ENCODE measurements at regions of chr12 and their contacts with region 1.

Region 1: DNA sequence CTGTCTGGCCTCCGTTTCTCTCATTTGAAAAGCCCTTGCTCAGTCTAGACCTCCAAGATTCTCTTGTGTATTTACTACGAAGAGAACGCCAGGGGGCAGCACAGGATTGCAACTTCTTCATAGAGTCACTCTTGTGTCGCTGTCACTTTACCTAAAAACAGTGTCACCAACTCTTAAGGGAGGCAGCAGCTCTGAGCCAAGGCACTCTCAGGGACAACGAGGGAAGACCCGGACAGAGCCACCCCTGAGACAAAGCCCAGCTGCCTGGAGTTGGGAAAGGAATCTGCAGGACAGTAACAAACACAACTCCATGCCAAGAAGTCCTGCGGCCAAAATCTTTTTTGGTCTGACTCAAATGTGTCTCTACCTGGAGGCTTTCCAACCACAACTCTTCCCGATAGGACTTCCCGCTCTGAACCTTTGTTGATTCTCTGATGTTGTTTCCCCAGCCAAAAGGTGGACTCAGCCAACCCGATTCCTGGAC is 9.6 kb upstream of the RPAP3 start:
- DNase-seq: peak; percentile 84 to 93 (median 89)
- H3K4me3 ChIP-seq: no peak overlapping the region
- H3K27ac ChIP-seq: no peak overlapping the region
- H3K4me1 ChIP-seq: peaks cover 4 to 33% (median 23%) of the 10 kb centered on the region in 4 experiments
- H3K27me3 ChIP-seq: no peaks in the 10 kb centered on the region

Region 2: DNA sequence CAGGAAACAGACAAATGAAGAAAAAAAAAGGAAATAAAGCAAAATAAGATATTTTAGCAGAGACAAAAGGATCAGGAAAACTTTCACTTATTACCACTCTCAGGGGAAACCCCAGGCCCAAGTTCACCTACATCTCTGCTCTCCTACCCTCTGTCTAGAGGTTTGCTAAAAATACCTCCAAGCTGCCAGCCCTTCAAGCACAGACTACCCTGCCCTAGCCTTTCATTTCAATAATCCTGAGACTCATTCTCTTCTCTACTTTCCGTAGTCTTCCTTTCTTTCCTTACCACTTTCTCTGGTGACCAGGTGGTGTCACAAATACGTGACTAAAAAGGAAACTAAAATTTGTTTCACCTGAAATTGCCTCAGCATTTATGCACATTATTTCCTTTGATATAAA is 43.4 kb before region 1 on chr12:
- CTCF ChIA-PET with region 1: no interaction called
- POLR2A ChIA-PET with region 1: no interaction called
- DNase-seq: no peak
- H3K4me3 ChIP-seq: no peak overlapping the region
- H3K27ac ChIP-seq: no peak overlapping the region
- H3K4me1 ChIP-seq: no peaks in the 10 kb centered on the region
- H3K27me3 ChIP-seq: no peaks in the 10 kb centered on the region

Region 3: GRCh38 chr12:47725893-47726292 is 10.5 kb after region 1 on chr12:
- CTCF ChIA-PET with region 1: interaction called, 55 read pairs
- POLR2A ChIA-PET with region 1: no interaction called
- DNase-seq: no peak
- H3K4me3 ChIP-seq: no peak overlapping the region
- H3K27ac ChIP-seq: no peak overlapping the region
- H3K4me1 ChIP-seq: peaks cover 0 to 12% (median 8%) of the 10 kb centered on the region in 4 experiments
- H3K27me3 ChIP-seq: peaks cover 0 to under 1% (median 0%) of the 10 kb centered on the region in 5 experiments

Region 4: DNA sequence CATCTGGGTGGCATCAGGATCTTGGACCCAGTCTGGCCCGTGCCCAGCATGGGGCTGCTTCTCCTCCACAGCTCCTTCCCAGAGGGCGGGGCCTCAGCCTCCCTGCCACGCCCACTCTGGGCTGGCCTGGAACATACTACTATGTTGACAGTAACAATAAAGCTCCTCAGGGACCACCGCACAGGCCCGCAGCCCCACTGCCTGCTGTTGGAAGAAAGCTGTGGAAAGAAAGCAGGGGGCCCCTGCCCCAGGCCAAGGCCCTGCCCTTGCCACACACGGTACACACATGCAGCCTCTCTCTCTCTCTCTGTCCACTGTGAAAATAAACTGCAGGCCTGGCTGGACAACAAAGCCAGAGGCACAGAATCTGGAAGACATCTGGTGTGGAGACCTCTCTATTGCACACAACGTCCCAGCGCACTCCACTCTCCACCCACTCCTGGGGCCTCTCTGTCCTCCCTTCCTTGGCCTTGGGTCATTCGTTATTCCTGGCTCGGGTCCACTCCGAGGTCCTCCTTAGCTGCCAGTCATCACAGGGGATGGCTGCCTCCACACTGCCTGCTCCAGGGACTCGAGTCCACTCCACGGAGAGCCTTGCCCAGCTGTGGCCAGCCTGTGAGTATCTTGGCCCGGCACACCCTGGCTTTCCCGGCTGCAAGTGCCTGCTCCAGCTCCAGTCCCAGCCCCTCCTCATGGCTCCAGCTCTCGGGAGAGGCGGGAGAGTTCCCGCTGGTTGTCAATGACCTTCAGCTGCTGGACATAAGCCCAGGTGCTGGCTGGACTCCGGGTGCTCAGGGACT is 21.6 kb after region 1 on chr12:
- CTCF ChIA-PET with region 1: interaction called, 184 read pairs
- POLR2A ChIA-PET with region 1: no interaction called
- DNase-seq: no peak
- H3K4me3 ChIP-seq: no peak overlapping the region
- H3K27ac ChIP-seq: no peak overlapping the region
- H3K4me1 ChIP-seq: peaks cover 4 to 25% (median 21%) of the 10 kb centered on the region in 4 experiments
- H3K27me3 ChIP-seq: no peaks in the 10 kb centered on the region

Region 5: DNA sequence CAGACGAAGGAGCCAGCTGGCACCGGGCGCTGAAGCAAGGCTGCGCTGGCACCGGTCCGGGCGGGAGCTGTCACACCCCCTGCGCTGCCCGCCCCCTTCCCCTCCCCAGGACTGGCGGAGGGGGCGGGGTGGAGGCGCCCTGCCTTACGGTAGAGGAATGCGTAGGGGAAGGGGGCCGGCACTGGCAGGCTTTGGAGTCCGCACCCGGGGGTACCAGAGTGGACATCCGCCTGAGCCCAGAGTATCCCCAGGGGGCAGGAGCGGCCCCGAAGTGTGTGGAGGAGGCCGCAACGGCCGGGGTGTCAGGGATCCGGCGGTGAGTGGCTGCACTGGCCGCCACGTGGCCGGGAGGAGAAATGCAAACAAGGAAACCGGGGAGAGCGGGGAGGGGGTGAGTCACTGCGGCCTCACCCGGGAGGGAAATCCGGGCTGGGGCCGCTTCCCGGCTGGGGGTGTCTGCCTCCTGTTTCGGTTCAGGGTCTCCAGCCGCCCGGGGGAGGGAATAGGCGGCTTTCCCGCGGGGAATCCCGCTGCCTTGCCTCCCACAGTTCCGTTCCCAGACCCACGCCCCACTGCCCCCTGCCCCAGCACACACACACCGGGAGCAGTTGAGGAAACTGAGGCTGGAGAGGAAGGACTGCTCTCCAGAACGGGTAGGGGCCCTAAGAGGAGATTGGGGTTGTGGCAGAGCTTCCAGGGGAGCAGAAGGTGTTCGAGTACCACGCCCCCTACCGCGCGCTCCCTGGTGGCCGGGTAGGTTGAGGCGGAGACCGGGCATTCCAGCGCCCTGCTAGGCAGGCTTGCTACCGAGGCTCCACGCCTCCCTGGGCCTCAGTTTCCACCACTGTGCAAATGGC is 43.6 kb after region 1 on chr12 and contains the start of gene RAPGEF3:
- CTCF ChIA-PET with region 1: interaction called, 109 read pairs
- POLR2A ChIA-PET with region 1: no interaction called
- DNase-seq: peak; percentile 79 to 84 (median 82)
- H3K4me3 ChIP-seq: peak within 1 kb of the TSS; percentile 25 to 90 (median 69)
- H3K27ac ChIP-seq: peak within 1 kb of the TSS; percentile 50 to 84
- H3K4me1 ChIP-seq: peaks cover 0 to 53% (median 36%) of the 10 kb centered on the region in 4 experiments
- H3K27me3 ChIP-seq: no peaks in the 10 kb centered on the region